ENCODE measurements at regions of chr1 and their contacts with region 1.

Region 1: GRCh38 chr1:46527474-46528296 is 23.8 kb downstream of the KNCN start:
- DNase-seq: peak; percentile 57 to 70
- ATAC-seq: peak; percentile 70 to 86
- H3K4me3 ChIP-seq: no peak overlapping the region
- H3K27ac ChIP-seq: no peak overlapping the region
- H3K4me1 ChIP-seq: no peaks in the 10 kb centered on the region
- H3K27me3 ChIP-seq: no peaks in the 10 kb centered on the region
- CTCF ChIP-seq: peak; percentile 83 to 94 (median 89)
- POLR2A ChIP-seq: no peak

Region 2: GRCh38 chr1:46401964-46402626 is 125.6 kb before region 1 on chr1:
- in situ Hi-C with region 1: no loop called
- intact Hi-C with region 1: loop called (anchors 1 kb)
- DNase-seq: peak; percentile 49 to 80
- ATAC-seq: peak; percentile 58 to 80
- H3K4me3 ChIP-seq: peak overlapping the region in 3 of 4 donors; percentile 17 to 34 (median 21)
- H3K27ac ChIP-seq: peak overlapping the region; percentile 47 to 80 (median 70)
- H3K4me1 ChIP-seq: peaks cover 34 to 49% of the 10 kb centered on the region in 2 donors
- H3K27me3 ChIP-seq: no peaks in the 10 kb centered on the region
- CTCF ChIP-seq: no peak
- POLR2A ChIP-seq: no peak

Region 3: GRCh38 chr1:46442317-46443161 is 85.1 kb before region 1 on chr1:
- in situ Hi-C with region 1: loop called in 3 of 4 experiments (anchors 5 to 25 kb)
- intact Hi-C with region 1: loop called (anchors 1 kb)
- DNase-seq: peak; percentile 31 to 48
- ATAC-seq: peak; percentile 63 to 77
- H3K4me3 ChIP-seq: peak overlapping the region; percentile 35 to 55 (median 40)
- H3K27ac ChIP-seq: no peak overlapping the region
- H3K4me1 ChIP-seq: peaks cover 0 to 6% of the 10 kb centered on the region in 2 donors
- H3K27me3 ChIP-seq: peaks cover 2 to 13% (median 5%) of the 10 kb centered on the region in 3 donors
- CTCF ChIP-seq: peak; percentile 61 to 88 (median 79)
- POLR2A ChIP-seq: no peak

Region 4: DNA sequence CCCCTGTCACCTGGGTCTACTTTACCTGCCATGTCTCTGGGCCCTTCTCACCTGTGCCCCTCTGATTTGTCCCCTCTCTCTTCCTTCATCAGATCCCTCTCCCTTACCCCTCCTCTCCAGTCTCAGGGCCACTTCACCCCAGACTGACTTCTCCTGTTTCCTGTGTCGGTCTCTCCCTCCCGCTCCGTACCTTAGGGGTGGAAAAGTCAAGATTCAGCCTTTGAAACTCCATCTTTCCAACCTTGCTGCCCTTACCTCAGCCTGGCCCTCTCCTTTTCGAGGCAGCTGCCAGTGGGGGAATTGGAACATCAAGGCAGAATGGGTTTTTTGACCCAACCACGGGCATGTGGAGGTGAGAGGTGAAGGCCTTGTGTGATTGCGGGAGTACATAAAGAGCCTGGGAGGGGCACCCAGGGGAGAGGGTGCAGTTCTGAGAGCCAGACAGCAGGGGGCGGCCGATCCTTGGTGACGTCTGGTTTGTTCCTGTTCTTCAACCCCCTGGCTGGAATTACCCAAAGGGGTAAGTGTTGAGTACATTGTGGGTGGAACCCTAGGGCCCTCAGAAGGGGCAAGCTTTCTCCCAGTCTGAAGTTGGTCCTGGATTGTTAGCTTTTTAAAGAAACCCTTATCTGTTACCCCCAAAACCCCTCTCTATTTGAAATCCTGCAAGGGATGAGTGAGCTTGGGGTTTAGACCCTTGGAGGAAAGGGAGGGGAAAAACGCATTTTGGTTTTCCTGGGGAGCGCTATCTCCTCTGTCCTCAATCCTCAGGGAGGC is 50.3 kb before region 1 on chr1:
- in situ Hi-C with region 1: loop called in 1 of 4 experiments (anchors 10 kb)
- intact Hi-C with region 1: loop called (anchors 1 kb)
- DNase-seq: peak; percentile 23 to 54
- ATAC-seq: peak; percentile 56 to 62
- H3K4me3 ChIP-seq: no peak overlapping the region
- H3K27ac ChIP-seq: no peak overlapping the region
- H3K4me1 ChIP-seq: no peaks in the 10 kb centered on the region
- H3K27me3 ChIP-seq: peaks cover 0 to 10% (median 0%) of the 10 kb centered on the region in 3 donors
- CTCF ChIP-seq: peak; percentile 63 to 86 (median 77)
- POLR2A ChIP-seq: no peak

Region 5: DNA sequence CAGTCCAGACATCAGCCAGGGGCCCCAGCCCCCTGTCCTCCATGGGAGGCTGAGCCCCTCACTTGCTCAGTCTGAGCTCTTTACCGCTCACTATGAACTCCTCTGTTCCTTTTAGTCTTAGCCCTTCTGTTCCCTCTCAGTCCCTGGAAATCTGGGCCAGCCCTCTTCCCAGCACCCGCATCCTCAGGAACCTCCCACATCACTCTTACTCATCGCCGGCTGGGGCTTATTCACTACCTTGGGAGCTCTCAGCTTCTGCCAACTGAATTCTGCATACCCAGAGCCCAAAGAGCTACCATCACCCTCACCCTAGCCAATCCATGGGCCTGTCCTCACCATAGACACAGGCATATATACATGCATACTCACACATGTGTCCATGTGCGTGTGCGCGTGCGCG is 12.3 kb after region 1 on chr1:
- in situ Hi-C with region 1: no loop called
- intact Hi-C with region 1: no loop called
- DNase-seq: no peak
- ATAC-seq: no peak
- H3K4me3 ChIP-seq: no peak overlapping the region
- H3K27ac ChIP-seq: no peak overlapping the region
- H3K4me1 ChIP-seq: no peaks in the 10 kb centered on the region
- H3K27me3 ChIP-seq: peaks cover 16 to 21% (median 17%) of the 10 kb centered on the region in 3 donors
- CTCF ChIP-seq: no peak
- POLR2A ChIP-seq: no peak

Region 6: DNA sequence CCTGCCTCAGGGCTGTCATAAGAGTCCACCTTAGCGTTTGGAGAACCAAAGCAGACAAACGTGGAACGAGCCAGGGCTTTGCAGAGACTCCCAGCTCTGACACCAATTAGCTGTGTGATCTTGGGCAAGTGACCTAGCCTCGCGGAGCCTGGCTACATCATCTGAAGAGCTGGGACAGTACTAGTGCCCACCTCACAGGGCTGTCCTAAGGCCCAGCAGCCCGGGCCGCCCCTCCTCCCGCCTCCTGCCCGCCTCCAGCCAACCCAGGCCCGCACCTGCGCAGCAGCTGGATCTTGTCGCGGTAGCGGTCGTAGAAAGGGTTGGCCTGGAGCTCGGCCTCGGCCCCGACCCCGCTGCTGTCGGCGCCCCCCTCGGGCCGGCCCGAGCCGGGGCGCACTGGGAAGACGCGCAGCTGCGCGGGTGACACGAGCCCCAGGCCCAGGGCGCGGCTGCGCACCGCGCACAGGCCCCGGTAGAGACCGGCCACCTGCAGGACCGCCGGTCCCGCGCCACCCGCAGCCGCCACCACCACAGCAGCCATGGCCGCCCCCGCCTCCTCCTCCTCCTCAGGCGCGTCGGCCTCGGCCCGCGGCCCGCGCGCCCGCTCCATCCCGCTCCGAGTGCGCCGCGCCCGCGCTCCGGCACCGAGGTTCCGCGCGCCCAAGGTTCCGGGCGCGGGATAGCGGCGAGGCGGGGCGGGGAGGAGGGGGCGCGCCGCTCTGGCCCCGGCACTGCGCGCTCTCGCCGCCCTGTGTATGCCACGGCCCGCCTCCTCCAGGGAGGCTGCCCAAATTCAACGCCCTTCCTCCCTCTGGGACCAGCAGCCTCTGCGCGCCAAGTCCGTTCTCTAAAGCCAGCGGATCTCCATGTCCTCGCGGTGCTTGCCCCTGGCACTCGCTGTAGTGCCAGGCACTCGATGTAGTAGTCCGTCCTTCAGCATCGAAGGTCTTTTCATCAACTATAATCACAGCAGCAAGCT is 140.4 kb after region 1 on chr1 and contains the start of gene ATPAF1:
- in situ Hi-C with region 1: no loop called
- intact Hi-C with region 1: no loop called
- DNase-seq: peak; percentile 28 to 83
- ATAC-seq: peak; percentile 84 to 87
- H3K4me3 ChIP-seq: peak within 1 kb of the TSS; percentile 79 to 91 (median 90)
- H3K27ac ChIP-seq: peak within 1 kb of the TSS; percentile 72 to 91 (median 83)
- H3K4me1 ChIP-seq: peaks cover 21 to 22% of the 10 kb centered on the region in 2 donors
- H3K27me3 ChIP-seq: no peaks in the 10 kb centered on the region
- CTCF ChIP-seq: peak in 1 of 5 experiments; percentile 12
- POLR2A ChIP-seq: peak; percentile 24 to 52
- total RNA-seq, gene ATPAF1: 76.6 to 173 (median 135) TPM

Region 7: DNA sequence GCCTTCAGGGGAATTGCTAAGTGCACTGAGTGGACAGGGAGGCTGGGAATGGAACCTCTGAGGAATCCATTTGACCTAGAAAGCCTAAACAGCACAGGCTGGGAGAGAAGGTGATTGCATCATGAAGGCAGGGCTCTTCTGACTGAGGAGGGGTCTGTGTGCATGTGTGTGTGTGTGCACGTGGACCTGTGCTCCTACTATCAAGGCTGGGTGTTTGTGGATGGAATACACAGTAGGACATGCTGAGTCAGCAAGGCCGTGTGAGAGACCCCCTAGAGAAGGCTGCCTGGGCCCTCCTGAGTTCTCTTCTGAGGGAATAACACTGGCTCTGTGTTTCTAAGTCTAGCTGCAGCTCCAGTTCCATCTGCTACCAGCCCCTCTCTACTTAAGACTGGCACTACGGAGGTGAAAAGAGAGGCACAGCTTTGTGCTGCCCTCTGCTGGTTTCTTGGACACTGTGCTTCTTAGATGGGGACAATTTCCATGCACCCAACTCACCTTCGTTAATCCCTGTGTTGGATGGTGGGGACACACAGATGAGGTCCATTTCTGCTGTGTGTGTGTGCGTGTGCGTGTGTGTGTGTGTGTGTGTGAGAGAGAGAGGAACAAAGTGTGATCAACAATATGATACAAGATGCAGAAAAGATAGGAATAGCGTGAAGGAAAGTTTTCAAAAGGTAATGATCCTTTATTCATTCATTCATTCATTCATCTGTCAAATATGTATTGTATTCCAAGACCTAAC is 197.5 kb after region 1 on chr1:
- in situ Hi-C with region 1: loop called in 1 of 4 experiments (anchors 10 kb)
- intact Hi-C with region 1: loop called (anchors 2 kb)
- DNase-seq: peak; percentile 34 to 65
- ATAC-seq: peak; percentile 90 to 98
- H3K4me3 ChIP-seq: no peak overlapping the region
- H3K27ac ChIP-seq: no peak overlapping the region
- H3K4me1 ChIP-seq: peaks cover 4 to 11% of the 10 kb centered on the region in 2 donors
- H3K27me3 ChIP-seq: no peaks in the 10 kb centered on the region
- CTCF ChIP-seq: peak; percentile 74 to 83 (median 76)
- POLR2A ChIP-seq: no peak